ENCODE measurements at regions of chr10 and their contacts with region 1.

Region 1: GRCh38 chr10:58064714-58065528 is 202.8 kb downstream of the IPMK start:
- DNase-seq: no peak
- ATAC-seq: no peak
- H3K4me3 ChIP-seq: no peak overlapping the region
- H3K27ac ChIP-seq: no peak overlapping the region
- H3K4me1 ChIP-seq: no peaks in the 10 kb centered on the region
- H3K27me3 ChIP-seq: no peaks in the 10 kb centered on the region
- CTCF ChIP-seq: peak in 3 of 5 experiments; percentile 12 to 40 (median 39)
- POLR2A ChIP-seq: no peak

Region 2: DNA sequence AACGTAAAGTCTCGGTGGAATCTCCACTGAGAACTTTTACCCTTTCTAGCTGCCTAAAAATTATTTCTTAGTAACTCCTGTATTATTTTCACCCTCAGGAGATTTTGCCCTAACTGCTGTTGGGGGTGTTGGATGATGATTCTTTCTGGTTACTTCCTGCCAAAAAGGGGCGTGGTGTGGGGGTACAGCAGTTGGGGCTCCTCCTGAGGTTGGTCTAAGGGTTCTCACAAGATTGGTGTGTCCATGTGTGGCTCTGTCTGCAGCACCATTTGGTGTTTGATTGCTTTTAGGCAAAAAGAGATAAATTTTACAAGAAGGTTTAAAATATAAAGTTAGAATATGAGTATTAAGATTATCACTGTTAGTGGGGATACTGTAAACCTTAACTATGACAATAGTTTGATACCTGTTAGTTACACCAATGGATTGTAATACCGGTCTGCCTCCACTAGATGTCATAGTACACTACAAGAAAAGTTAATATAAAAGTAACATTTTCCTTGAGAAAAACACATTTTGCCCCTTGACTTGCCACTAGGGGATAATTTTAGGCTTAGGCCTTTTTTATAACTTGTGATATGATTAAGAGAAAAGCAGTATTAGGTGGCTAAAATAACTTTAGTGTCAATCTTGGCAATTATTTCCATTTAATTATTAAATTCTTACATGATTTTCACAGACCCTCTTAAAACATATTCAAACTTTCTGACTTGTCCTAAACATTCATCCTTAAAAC is 725.9 kb before region 1 on chr10:
- in situ Hi-C with region 1: no loop called
- intact Hi-C with region 1: loop called (anchors 10 kb)
- DNase-seq: no peak
- ATAC-seq: no peak
- H3K4me3 ChIP-seq: no peak overlapping the region
- H3K27ac ChIP-seq: no peak overlapping the region
- H3K4me1 ChIP-seq: no peaks in the 10 kb centered on the region
- H3K27me3 ChIP-seq: no peaks in the 10 kb centered on the region
- CTCF ChIP-seq: peak; percentile 16 to 46 (median 27)
- POLR2A ChIP-seq: no peak

Region 3: DNA sequence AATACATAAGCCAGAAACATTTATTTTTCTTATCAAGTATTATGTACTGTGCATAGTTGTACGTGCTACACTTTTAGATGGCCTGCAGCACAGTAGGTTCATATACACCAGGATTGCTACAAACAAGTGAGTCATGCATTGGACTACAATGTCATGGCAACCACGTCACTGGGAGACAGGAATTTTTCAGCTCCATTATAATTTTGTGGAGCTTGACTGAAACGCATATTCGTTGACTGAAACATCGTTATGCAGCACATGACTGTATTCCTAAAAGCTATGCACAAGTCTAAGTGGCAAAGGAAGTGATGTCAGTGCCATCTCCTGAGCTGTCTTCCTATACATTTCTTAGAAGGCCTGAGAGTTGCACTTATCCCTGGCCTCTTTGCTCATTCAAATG is 669.0 kb before region 1 on chr10:
- in situ Hi-C with region 1: no loop called
- intact Hi-C with region 1: no loop called
- DNase-seq: no peak
- ATAC-seq: no peak
- H3K4me3 ChIP-seq: no peak overlapping the region
- H3K27ac ChIP-seq: no peak overlapping the region
- H3K4me1 ChIP-seq: no peaks in the 10 kb centered on the region
- H3K27me3 ChIP-seq: no peaks in the 10 kb centered on the region
- CTCF ChIP-seq: no peak
- POLR2A ChIP-seq: no peak

Region 4: GRCh38 chr10:57830877-57831560 is 233.9 kb before region 1 on chr10:
- in situ Hi-C with region 1: no loop called
- intact Hi-C with region 1: no loop called
- DNase-seq: no peak
- ATAC-seq: no peak
- H3K4me3 ChIP-seq: no peak overlapping the region
- H3K27ac ChIP-seq: no peak overlapping the region
- H3K4me1 ChIP-seq: no peaks in the 10 kb centered on the region
- H3K27me3 ChIP-seq: no peaks in the 10 kb centered on the region
- CTCF ChIP-seq: no peak
- POLR2A ChIP-seq: no peak

Region 5: GRCh38 chr10:58177362-58177947 is 112.5 kb after region 1 on chr10:
- in situ Hi-C with region 1: no loop called
- intact Hi-C with region 1: no loop called
- DNase-seq: no peak
- ATAC-seq: peak in 1 of 2 donors; percentile 50
- H3K4me3 ChIP-seq: no peak overlapping the region
- H3K27ac ChIP-seq: no peak overlapping the region
- H3K4me1 ChIP-seq: no peaks in the 10 kb centered on the region
- H3K27me3 ChIP-seq: no peaks in the 10 kb centered on the region
- CTCF ChIP-seq: peak; percentile 50 to 69 (median 64)
- POLR2A ChIP-seq: no peak

Measured in gastrocnemius medialis (tissue), 4 donors.